Activated B cell treated with CpG ODN at 0.5 μM for 24 hours (primary cell): ENCODE measurements at regions of chr5 and their contacts with region 1.

Region 1: GRCh38 chr5:84255315-84255714 is 129.4 kb downstream of the EDIL3 start:
- DNase-seq: no peak
- ATAC-seq: no peak
- H3K4me3 Mint-ChIP-seq: no peak overlapping the region
- H3K27ac Mint-ChIP-seq: no peak overlapping the region
- H3K4me1 Mint-ChIP-seq: no peaks in the 10 kb centered on the region
- H3K27me3 Mint-ChIP-seq: no peaks in the 10 kb centered on the region
- CTCF ChIP-seq: no peak

Region 2: DNA sequence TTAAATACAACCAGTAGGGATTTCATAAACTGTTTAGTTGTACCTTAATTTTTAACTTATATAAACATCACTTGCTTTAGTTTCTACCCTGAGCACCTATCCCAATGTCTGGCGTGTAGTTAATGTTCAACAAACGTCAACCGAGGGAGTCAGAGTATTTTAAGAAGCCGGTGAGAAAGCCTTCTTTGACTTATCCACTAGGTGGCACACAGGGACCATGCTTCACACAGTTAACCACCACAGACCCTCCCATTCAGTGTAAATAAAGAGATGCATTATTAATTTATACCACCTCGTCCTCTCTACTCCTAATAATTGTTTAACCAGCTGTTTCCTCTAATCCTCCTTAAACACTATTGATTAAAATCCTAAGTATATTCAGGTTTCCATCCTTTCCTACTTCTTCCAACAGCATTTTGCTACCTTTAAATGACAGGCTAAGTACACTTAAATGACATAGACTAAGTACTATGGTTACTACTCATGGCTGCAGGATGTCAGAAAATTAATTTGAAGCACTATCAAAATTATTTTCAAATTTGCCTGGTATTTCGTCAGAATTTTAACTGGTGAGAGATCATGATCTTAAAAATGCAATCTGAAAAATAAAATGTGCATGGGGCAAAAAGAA is 537.0 kb before region 1 on chr5:
- CTCF ChIA-PET with region 1: no interaction called
- POLR2A ChIA-PET with region 1: no interaction called
- intact Hi-C with region 1: loop called (anchors 2 kb)
- DNase-seq: no peak
- ATAC-seq: peak; percentile 60
- H3K4me3 Mint-ChIP-seq: no peak overlapping the region
- H3K27ac Mint-ChIP-seq: no peak overlapping the region
- H3K4me1 Mint-ChIP-seq: peaks cover 13% of the 10 kb centered on the region
- H3K27me3 Mint-ChIP-seq: peaks cover 34% of the 10 kb centered on the region
- CTCF ChIP-seq: no peak

Region 3: GRCh38 chr5:84119252-84119651 is 136.1 kb before region 1 on chr5:
- CTCF ChIA-PET with region 1: no interaction called
- POLR2A ChIA-PET with region 1: no interaction called
- intact Hi-C with region 1: no loop called
- DNase-seq: no peak
- ATAC-seq: no peak
- H3K4me3 Mint-ChIP-seq: no peak overlapping the region
- H3K27ac Mint-ChIP-seq: no peak overlapping the region
- H3K4me1 Mint-ChIP-seq: no peaks in the 10 kb centered on the region
- H3K27me3 Mint-ChIP-seq: no peaks in the 10 kb centered on the region
- CTCF ChIP-seq: no peak

Region 4: DNA sequence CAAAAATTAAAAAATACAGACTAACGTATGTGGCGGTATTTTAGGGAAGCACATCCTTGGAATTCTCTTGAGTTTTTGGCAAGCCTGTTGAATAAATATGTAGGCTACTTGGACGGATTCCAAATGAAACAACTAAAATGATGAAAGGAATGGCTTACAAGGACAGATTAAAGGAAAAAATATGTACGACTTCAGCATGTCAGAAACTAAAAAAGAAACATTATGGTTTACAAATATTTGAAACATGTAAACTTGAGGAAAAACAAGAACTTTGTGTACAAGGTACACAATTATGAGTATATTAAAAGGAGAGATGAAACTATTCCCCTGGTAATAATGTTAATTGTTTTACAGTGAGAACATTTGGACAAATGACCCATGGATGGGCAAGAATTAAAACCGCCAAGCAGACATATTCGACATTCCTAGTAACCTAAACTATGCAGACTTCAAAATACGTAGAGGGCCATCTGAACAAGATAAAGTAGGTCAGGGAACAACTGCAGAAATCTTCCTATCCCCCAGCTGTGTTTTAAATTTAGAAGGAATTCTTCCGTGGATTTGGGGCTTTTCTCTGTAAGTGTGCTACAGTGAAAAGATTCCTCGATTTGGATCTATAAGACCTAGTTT is 116.9 kb after region 1 on chr5:
- CTCF ChIA-PET with region 1: no interaction called
- POLR2A ChIA-PET with region 1: no interaction called
- intact Hi-C with region 1: no loop called
- DNase-seq: no peak
- ATAC-seq: no peak
- H3K4me3 Mint-ChIP-seq: no peak overlapping the region
- H3K27ac Mint-ChIP-seq: no peak overlapping the region
- H3K4me1 Mint-ChIP-seq: no peaks in the 10 kb centered on the region
- H3K27me3 Mint-ChIP-seq: no peaks in the 10 kb centered on the region
- CTCF ChIP-seq: no peak